ENCODE measurements at regions of chr13 and their contacts with region 1.

Region 1: GRCh38 chr13:111114362-111115060 is 599 bp upstream of the ARHGEF7 start:
- DNase-seq: no peak
- ATAC-seq: peak; percentile 70

Region 2: DNA sequence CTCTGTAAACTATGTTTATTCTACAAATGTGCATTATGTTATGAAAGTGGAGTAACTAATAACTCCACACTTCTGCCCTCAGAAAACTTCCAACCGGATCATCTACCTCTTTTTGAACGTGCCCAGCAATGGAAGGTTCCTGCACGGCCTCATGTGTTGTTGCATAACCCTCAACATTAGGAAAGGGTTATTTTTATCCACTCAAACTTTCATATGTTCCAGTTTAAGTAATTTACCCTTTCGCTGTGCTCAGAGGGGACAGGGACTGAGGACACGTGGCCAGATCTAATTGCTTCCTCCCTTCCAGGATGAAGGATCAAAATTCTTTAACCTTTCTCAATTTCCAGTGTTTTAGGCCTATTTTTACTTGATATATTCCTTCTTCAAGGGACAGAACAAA is 1357.7 kb before region 1 on chr13:
- intact Hi-C with region 1: loop called (anchors 5 kb)
- DNase-seq: no peak
- ATAC-seq: peak; percentile 65

Region 3: DNA sequence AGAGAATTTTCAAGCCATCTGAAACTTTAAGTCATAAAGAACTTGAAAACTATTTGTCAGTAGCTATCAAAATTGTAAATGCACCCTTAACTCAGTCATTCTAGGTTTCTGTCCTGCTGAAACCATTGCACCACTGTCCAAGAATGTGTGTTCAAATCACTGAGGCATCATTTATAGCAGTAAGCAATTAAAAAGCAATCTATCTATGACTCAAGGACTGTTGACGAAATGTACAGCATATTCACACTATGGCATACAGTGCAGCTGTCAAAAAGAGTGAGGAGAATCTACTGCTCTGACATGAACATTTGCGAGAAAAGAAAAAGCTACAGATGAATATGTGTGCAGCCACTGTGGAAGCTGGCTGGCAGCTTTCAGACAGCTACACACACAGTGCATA is 329.8 kb before region 1 on chr13:
- intact Hi-C with region 1: no loop called
- DNase-seq: no peak
- ATAC-seq: no peak

Region 4: GRCh38 chr13:110989331-110989730 is 125.2 kb before region 1 on chr13:
- intact Hi-C with region 1: no loop called
- DNase-seq: no peak
- ATAC-seq: no peak

Measured in sciatic nerve (tissue), 2 donors.